Sigmoid colon (tissue), 7 donors: ENCODE measurements at regions of chr22 and their contacts with region 1.

Region 1: DNA sequence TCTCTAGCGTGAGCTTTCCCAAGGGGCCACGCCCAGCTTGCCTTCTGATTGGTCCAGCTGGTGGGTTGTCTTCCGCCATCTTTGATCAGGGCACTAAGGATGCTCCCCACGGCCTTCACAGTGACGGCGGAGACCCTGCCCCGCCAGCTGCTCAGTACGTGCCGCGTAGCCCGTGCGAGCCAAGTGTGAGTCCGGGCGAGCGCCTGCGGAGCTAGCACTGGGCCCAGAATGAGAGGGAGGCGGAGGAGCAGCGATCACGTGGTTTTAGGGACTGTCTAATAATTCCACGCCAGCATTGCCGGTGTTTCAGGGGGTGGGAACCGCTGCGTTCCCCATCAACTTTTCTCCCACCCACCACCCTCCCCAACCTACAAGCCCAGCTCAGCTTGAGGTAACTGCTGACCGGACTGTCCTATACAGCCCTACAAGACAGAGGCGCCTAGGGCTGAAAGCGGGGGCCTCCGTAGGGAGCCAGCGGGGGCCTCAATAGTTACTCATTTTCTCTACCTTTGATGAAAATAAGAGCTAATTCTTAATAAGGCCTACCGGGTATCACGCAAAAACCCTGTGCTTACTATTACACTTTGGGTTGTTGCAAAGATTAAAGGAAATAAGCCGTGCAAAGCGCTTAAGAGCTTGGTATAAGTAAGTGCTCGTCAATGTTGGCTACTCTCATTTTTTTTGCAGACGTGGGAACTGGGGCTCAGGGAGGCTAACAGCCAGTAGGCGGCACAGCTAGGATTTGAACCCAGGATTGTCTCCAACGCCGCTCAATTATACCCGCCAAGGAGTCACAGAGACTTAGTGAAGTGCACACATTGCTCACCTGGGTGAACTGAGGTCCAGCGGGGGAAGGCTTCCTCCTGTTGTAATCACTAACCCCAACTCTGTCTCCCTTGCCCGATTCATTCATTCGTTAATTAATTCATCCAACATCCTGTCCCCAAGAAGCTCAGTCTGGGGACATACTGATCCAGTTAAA is 1.3 kb upstream of the MTFP1 start:
- DNase-seq: peak; percentile 100
- H3K4me3 ChIP-seq: peak overlapping the region; percentile 55 to 72 (median 63)
- H3K27ac ChIP-seq: peak overlapping the region; percentile 91 to 97 (median 94)
- H3K4me1 ChIP-seq: peaks cover 0 to 58% (median 49%) of the 10 kb centered on the region in 4 donors
- H3K27me3 ChIP-seq: no peaks in the 10 kb centered on the region
- CTCF ChIP-seq: no peak
- EP300 ChIP-seq: no peak
- POLR2A ChIP-seq: no peak

Region 2: DNA sequence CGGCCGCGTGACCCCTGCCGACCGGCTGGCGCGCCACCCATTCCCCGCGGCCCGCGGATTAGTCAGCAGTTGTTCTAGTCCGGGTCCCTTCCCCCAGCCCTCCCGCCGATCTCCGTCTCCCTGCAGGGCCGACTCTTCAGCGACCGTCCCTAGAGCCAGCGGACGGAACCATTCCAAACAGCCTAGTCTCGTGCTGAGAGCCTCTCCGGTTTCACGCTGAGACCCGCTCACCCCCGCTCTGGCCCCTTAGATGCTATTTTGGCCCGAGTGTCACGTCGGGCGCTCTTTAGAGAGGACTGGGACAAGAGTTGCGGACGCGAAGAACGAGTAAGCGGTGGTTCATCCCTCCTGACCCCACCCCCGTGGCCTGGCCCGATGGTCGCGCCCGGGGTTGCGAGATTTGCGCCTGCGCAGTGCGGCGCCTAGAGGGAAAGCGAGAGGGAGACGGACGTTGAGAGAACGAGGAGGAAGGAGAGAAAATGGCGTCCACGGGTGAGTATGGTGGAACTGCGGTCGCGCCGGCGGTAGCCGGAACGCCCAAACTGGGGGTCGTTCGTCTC is 1156.3 kb before region 1 on chr22 and contains the starts of genes EWSR1 and RHBDD3:
- intact Hi-C with region 1: loop called (anchors 5 kb)
- DNase-seq: peak; percentile 98
- H3K4me3 ChIP-seq: peak within 1 kb of the TSS; percentile 72 to 80 (median 76)
- H3K27ac ChIP-seq: peak within 1 kb of the TSS; percentile 94 to 100 (median 96)
- H3K4me1 ChIP-seq: peaks cover 0 to 59% (median 51%) of the 10 kb centered on the region in 4 donors
- H3K27me3 ChIP-seq: no peaks in the 10 kb centered on the region
- CTCF ChIP-seq: no peak
- EP300 ChIP-seq: no peak
- POLR2A ChIP-seq: peak; percentile 77 to 79
- total RNA-seq, gene EWSR1: 170 to 233 (median 177) TPM
- total RNA-seq, gene RHBDD3: 16.1 to 20.5 (median 18.0) TPM

Region 3: DNA sequence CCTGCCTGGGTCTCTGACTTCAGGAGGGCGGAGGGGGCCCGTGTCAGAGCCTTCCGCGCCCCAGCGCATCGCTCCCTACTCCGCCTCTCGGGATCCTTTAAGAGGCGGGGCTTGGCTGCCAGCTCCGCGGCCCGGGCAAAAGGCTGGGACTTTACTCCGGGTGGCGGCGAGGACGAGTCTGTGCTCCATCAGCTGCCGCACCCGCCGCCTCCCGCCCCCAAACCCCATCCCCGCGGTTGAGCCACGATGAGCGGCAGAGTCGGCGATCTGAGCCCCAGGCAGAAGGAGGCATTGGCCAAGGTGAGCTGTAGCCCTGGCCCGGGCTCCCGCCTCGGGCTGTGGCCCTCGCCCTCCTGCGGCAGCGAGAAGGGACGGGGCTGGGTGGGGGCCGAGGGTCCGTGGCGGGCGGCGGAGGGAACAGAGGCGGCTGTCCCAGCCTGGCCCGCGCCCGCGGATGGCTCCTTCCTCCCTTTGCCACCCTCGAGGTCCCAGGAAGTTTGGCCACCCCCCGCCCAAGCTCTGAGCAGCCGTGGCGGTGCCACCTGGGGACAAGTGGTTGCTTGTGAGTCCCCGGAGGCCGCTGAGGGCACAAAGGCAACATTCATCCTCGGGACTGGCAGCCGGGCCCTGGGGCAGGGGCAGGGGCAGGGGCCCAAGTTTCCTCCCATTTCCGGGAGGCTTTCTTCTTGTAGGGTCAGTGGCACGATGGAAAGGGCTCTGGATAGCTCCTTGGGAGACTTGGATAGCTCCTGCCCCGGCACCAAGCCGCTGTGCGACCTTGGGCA is 27.2 kb before region 1 on chr22 and contains the start of gene SEC14L2:
- intact Hi-C with region 1: loop called (anchors 2 kb)
- DNase-seq: peak; percentile 88
- H3K4me3 ChIP-seq: peak within 1 kb of the TSS; percentile 57 to 77 (median 66)
- H3K27ac ChIP-seq: peak within 1 kb of the TSS; percentile 60 to 77 (median 72)
- H3K4me1 ChIP-seq: peaks cover 0 to 32% (median 23%) of the 10 kb centered on the region in 4 donors
- H3K27me3 ChIP-seq: no peaks in the 10 kb centered on the region
- CTCF ChIP-seq: no peak
- EP300 ChIP-seq: no peak
- POLR2A ChIP-seq: peak in 1 of 2 donors; percentile 5
- total RNA-seq, gene SEC14L2: 4.7 to 12.1 (median 7.8) TPM

Region 4: DNA sequence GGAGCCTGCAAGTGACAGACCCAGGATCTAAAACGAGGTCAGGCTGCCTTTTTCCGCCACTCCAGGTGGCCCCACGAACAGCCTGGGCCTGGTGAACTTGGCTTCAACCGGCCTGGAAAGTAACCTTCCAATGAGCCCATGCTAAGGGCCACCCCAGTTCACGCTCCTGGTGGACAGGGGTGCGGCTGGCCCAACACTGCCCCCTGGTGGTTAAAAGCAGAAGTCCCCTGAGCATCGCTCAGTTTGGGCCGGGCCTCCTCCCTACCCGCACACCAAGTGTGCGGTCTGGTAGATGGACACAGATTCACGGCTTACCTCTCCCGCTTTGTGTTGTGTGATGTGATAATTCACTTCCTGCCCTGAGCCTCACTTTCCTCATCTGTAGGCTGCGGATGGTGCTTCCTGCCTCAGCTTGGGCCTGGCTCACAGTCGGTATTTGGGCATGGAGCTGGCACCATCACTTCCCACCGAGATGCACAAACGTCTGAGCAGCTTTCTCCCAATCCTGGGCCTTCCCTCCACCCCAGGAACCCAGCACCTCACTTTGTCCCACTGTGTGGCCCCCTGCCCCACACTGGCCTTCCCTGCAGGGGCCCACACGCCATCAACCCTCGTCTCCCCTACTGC is 61.2 kb after region 1 on chr22:
- intact Hi-C with region 1: loop called (anchors 5 kb)
- DNase-seq: peak; percentile 77
- H3K4me3 ChIP-seq: no peak overlapping the region
- H3K27ac ChIP-seq: no peak overlapping the region
- H3K4me1 ChIP-seq: peaks cover 0 to 5% (median 0%) of the 10 kb centered on the region in 4 donors
- H3K27me3 ChIP-seq: peaks cover 0 to 4% (median 0%) of the 10 kb centered on the region in 3 donors
- CTCF ChIP-seq: peak; percentile 78 to 93 (median 87)
- EP300 ChIP-seq: no peak
- POLR2A ChIP-seq: no peak

Region 5: GRCh38 chr22:30514252-30514651 is 90.0 kb after region 1 on chr22:
- intact Hi-C with region 1: no loop called
- DNase-seq: no peak
- H3K4me3 ChIP-seq: no peak overlapping the region
- H3K27ac ChIP-seq: no peak overlapping the region
- H3K4me1 ChIP-seq: no peaks in the 10 kb centered on the region
- H3K27me3 ChIP-seq: no peaks in the 10 kb centered on the region
- CTCF ChIP-seq: no peak
- EP300 ChIP-seq: no peak
- POLR2A ChIP-seq: no peak

Region 6: GRCh38 chr22:30606455-30607299 is 182.4 kb after region 1 on chr22 and contains the start of gene TCN2:
- intact Hi-C with region 1: loop called (anchors 10 kb)
- DNase-seq: peak; percentile 88
- H3K4me3 ChIP-seq: peak within 1 kb of the TSS; percentile 44 to 67 (median 58)
- H3K27ac ChIP-seq: peak within 1 kb of the TSS; percentile 63 to 88 (median 82)
- H3K4me1 ChIP-seq: peaks cover 0 to 50% (median 41%) of the 10 kb centered on the region in 4 donors
- H3K27me3 ChIP-seq: no peaks in the 10 kb centered on the region
- CTCF ChIP-seq: no peak
- EP300 ChIP-seq: no peak
- POLR2A ChIP-seq: peak in 1 of 2 donors; percentile 37
- total RNA-seq, gene TCN2: 23.5 to 45.7 (median 25.5) TPM